ENCODE measurements at regions of chr1 and their contacts with region 1.

Region 1: GRCh38 chr1:207454046-207454964 is at the start of gene CR2:
- DNase-seq: peak; percentile 86
- H3K4me3 ChIP-seq: peak within 1 kb of the TSS; percentile 70
- H3K27ac ChIP-seq: no peak within 1 kb of the TSS
- H3K4me1 ChIP-seq: peaks cover 36% of the 10 kb centered on the region
- CTCF ChIP-seq: peak; percentile 76
- total RNA-seq, gene CR2: 3.7 and 4.4 TPM in 2 replicates

Region 2: DNA sequence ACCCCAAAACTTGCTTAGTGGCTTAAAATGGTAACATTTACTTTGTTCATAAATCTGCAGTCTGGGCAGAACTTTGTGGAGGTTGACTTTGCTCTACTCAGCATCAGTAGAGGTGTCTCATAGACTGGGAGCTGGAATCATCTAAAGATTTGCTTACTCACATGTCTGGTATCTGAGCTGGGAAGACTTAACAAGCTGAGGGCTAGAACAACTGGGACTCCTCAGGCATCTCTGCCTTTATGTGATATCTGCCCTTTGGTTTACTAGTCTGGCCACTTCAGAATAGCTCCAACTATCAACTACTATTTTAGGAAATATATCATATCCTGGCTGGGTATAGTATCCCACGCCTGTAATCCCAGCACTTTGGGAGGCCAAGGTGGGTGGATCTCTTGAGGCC is 267.8 kb before region 1 on chr1:
- CTCF ChIA-PET with region 1: no interaction called
- POLR2A ChIA-PET with region 1: no interaction called
- intact Hi-C with region 1: no loop called
- DNase-seq: no peak
- H3K4me3 ChIP-seq: no peak overlapping the region
- H3K27ac ChIP-seq: no peak overlapping the region
- H3K4me1 ChIP-seq: no peaks in the 10 kb centered on the region
- CTCF ChIP-seq: no peak

Region 3: DNA sequence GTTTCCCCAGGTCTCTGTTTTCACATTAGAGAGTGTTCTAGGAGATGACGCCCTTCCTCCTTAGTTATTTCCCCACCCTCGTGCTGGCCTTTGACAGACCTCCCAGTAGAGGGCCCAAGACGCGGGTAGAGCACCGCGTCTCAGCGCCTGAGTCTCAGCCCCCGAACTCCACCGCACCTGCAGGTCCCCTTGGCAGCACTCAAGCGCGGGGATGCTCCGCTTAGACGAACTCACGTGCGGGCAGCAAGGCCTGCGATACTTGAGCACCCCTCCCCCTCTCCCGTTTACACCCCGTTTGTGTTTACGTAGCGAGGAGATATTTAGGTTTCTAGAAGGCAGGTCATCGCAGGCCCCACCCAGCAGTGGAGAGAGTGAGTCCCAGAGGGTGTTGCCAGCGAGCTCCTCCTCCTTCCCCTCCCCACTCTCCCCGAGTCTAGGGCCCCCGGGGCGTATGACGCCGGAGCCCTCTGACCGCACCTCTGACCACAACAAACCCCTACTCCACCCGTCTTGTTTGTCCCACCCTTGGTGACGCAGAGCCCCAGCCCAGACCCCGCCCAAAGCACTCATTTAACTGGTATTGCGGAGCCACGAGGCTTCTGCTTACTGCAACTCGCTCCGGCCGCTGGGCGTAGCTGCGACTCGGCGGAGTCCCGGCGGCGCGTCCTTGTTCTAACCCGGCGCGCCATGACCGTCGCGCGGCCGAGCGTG is 133.1 kb before region 1 on chr1 and contains the start of gene CD55:
- CTCF ChIA-PET with region 1: no interaction called
- POLR2A ChIA-PET with region 1: interaction called, 3 read pairs
- intact Hi-C with region 1: loop called (anchors 1 kb)
- DNase-seq: peak; percentile 96
- H3K4me3 ChIP-seq: peak within 1 kb of the TSS; percentile 87
- H3K27ac ChIP-seq: peak within 1 kb of the TSS; percentile 73
- H3K4me1 ChIP-seq: peaks cover 20% of the 10 kb centered on the region
- CTCF ChIP-seq: peak; percentile 67; the same call in 1 of the 2 replicates
- total RNA-seq, gene CD55: 18.8 and 28.1 TPM in 2 replicates

Region 4: DNA sequence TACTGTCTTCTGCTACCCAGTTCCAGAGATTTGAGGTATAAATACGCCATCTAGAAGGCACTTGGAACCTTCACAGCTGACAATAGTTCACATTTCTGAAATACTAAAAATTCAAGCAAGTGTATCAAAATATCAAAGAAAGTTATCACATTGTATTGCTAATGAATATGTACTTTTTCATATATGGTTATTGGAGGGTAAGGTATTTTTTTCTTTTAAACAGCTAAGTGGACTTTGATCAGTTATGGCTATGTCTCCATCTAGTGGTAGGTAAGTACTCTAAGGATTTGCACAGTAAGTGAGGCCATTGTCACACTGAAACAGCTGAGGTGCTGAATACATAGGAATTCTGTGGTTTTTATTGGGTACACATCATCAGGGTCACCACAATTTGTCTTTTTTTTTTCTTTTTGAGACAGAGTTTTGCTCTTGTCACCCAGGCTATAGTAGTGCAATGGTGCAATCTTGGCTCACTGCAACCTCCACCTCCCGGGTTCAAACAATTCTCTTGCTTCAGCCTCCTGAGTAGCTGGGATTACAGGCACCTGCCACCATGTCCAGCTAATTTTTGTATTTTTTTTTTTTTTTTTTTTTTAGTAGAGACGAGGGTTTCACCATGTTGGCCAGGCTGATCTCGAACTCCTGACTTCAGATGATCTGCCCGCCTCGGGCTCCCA is 49.3 kb before region 1 on chr1:
- CTCF ChIA-PET with region 1: no interaction called
- POLR2A ChIA-PET with region 1: no interaction called
- intact Hi-C with region 1: loop called (anchors 2 kb)
- DNase-seq: peak; percentile 78
- H3K4me3 ChIP-seq: no peak overlapping the region
- H3K27ac ChIP-seq: no peak overlapping the region
- H3K4me1 ChIP-seq: no peaks in the 10 kb centered on the region
- CTCF ChIP-seq: peak; percentile 92

Region 5: DNA sequence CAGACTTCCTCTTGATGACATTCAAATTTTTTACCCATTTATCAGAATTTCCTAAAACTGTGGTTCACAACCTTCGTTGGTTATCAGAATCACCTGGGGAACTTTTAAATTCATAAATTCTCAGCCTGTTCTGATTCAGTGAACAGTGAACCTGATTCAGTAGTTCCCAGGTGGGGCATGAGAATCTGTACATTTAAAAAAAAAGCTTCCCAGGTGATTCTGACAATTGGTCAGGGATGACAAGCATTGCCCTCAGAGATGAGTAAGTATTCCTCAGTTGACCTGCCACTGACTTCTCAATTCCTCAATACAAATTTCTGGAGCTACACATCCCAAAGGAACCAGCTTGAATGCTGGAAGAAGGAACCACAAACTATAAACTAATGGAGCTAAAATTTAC is 23.7 kb before region 1 on chr1:
- CTCF ChIA-PET with region 1: no interaction called
- POLR2A ChIA-PET with region 1: interaction called, 4 read pairs
- intact Hi-C with region 1: loop called (anchors 1 kb)
- DNase-seq: peak; percentile 51
- H3K4me3 ChIP-seq: no peak overlapping the region
- H3K27ac ChIP-seq: peak overlapping the region; percentile 69
- H3K4me1 ChIP-seq: peaks cover 42% of the 10 kb centered on the region
- CTCF ChIP-seq: no peak

Region 6: GRCh38 chr1:207751790-207752455 is 297.6 kb after region 1 on chr1 and contains the start of gene CD46:
- CTCF ChIA-PET with region 1: no interaction called
- POLR2A ChIA-PET with region 1: no interaction called
- intact Hi-C with region 1: loop called (anchors 10 kb)
- DNase-seq: peak; percentile 96
- H3K4me3 ChIP-seq: peak within 1 kb of the TSS; percentile 98
- H3K27ac ChIP-seq: peak within 1 kb of the TSS; percentile 100
- H3K4me1 ChIP-seq: peaks cover 74% of the 10 kb centered on the region
- CTCF ChIP-seq: no peak
- total RNA-seq, gene CD46: 74.0 and 83.8 TPM in 2 replicates